Esophagus muscularis mucosa (tissue), 4 donors: ENCODE measurements at regions of chr10 and their contacts with region 1.

Region 1: GRCh38 chr10:125144693-125145623 is 15.4 kb downstream of the CTBP2 start:
- DNase-seq: no peak
- H3K4me3 ChIP-seq: no peak overlapping the region
- H3K27ac ChIP-seq: peak overlapping the region; percentile 95 to 99 (median 98)
- H3K4me1 ChIP-seq: peaks cover 68 to 100% (median 94%) of the 10 kb centered on the region in 4 donors
- H3K27me3 ChIP-seq: no peaks in the 10 kb centered on the region
- CTCF ChIP-seq: peak; percentile 48 to 62 (median 57)
- EP300 ChIP-seq: no peak
- POLR2A ChIP-seq: no peak

Region 2: DNA sequence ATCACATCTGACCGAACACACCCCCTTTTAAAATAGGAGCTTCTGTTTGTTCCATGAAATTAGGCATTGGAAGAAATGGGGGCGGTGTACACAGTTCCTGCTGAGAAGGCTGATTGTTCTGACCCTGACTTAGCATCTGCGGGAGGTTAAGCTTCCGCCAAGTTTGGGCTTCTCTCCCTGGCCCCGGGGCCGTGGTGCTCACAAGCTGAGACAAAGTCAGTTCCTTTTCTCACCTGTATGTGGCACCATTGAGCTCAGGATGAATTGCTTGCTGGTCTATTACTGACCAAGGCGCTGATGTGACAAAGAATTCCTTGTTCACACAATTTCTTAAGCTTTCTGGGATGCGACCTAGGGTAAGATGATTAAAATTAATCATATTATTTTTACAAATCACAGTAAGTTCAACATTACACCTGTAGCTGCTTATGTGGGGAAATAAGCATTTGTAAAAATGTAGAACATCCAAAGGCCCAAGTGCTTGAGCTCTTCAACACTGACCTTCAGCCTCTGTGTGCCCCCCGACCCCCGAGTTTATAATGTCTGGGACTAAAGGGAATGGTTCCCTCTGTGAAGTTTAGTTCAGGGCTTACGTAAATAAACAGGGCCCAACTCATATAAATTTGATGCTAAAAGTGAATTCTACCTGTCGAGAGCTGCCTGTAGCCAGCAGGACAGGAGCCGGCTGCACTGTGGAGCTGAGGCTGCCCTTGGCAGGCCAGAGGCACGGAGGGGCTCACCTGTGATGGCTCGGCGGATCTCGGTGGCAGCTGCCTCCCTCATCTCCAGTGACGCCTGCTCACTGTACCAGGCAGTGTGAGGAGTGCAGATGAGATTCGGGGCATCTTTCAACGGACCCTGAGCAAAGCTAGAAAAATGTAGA is 152.3 kb before region 1 on chr10:
- intact Hi-C with region 1: loop called (anchors 10 kb)
- DNase-seq: peak; percentile 94
- H3K4me3 ChIP-seq: no peak overlapping the region
- H3K27ac ChIP-seq: peak overlapping the region in 2 of 4 donors; percentile 35 to 37
- H3K4me1 ChIP-seq: peaks cover 11 to 16% (median 14%) of the 10 kb centered on the region in 4 donors
- H3K27me3 ChIP-seq: no peaks in the 10 kb centered on the region
- CTCF ChIP-seq: peak; percentile 80 to 85 (median 84)
- EP300 ChIP-seq: no peak
- POLR2A ChIP-seq: no peak

Region 3: GRCh38 chr10:125093199-125093973 is 51.6 kb before region 1 on chr10:
- intact Hi-C with region 1: loop called (anchors 5 kb)
- DNase-seq: peak; percentile 93
- H3K4me3 ChIP-seq: peak overlapping the region in 2 of 4 donors; percentile 21 to 32
- H3K27ac ChIP-seq: peak overlapping the region; percentile 81 to 87 (median 84)
- H3K4me1 ChIP-seq: peaks cover 68 to 94% (median 77%) of the 10 kb centered on the region in 4 donors
- H3K27me3 ChIP-seq: no peaks in the 10 kb centered on the region
- CTCF ChIP-seq: no peak
- EP300 ChIP-seq: peak; percentile 13
- POLR2A ChIP-seq: no peak